A673 (cell line): ENCODE measurements at regions of chr7 and their contacts with region 1.

Region 1: DNA sequence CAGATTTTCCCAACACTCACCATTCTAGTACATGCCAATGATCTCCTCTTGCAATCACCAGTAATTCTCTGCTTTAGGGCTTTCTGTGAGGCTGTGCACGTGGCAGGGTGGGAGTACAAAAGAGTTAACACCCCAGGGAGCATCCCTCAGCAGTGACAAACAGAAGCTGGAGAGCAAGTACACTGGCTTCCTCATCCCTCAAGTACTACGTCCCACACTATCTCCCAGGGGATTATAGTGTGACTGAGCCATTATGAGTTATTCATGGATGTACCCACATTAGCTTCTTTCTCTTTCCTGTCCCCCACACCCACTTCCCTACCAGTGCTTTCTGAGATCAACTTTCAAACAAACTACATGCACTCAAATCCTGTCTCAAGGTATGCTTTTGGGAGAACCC is 1216.5 kb upstream of the AUTS2 start:
- DNase-seq: peak; percentile 92
- H3K4me3 ChIP-seq: no peak overlapping the region
- H3K27ac ChIP-seq: peak overlapping the region; percentile 68
- H3K4me1 ChIP-seq: peaks cover 14% of the 10 kb centered on the region
- H3K27me3 ChIP-seq: no peaks in the 10 kb centered on the region
- CTCF ChIP-seq: no peak

Region 2: GRCh38 chr7:68192941-68193340 is 188.8 kb before region 1 on chr7:
- CTCF ChIA-PET with region 1: no interaction called
- POLR2A ChIA-PET with region 1: no interaction called
- intact Hi-C with region 1: loop called (anchors 5 kb)
- DNase-seq: no peak
- H3K4me3 ChIP-seq: no peak overlapping the region
- H3K27ac ChIP-seq: no peak overlapping the region
- H3K4me1 ChIP-seq: no peaks in the 10 kb centered on the region
- H3K27me3 ChIP-seq: no peaks in the 10 kb centered on the region
- CTCF ChIP-seq: no peak

Region 3: DNA sequence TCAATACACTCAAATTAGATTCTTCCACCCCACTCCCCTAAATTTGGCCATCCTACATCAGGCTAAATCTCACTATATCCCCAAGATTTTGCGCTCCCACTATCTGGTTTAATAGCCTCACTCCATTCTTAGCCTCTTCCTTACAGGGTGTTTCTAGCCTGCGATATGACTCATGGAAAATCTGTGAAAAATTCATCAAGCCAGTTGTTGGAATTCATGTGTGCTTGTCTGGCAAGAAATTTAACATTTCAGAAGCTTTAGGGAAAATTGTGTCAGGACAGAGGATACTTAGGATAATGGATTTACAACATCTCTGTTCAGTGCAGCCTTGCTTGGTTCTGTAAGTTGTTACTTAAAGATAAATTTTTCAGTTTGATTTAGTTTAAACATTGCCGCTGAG is 33.3 kb before region 1 on chr7:
- CTCF ChIA-PET with region 1: no interaction called
- POLR2A ChIA-PET with region 1: no interaction called
- intact Hi-C with region 1: no loop called
- DNase-seq: no peak
- H3K4me3 ChIP-seq: no peak overlapping the region
- H3K27ac ChIP-seq: no peak overlapping the region
- H3K4me1 ChIP-seq: no peaks in the 10 kb centered on the region
- H3K27me3 ChIP-seq: no peaks in the 10 kb centered on the region
- CTCF ChIP-seq: no peak